Posterior vena cava (tissue), 2 donors: ENCODE measurements at regions of chr17 and their contacts with region 1.

Region 1: GRCh38 chr17:78774956-78775571 is 7.0 kb downstream of the CYTH1 start:
- DNase-seq: no peak

Region 2: DNA sequence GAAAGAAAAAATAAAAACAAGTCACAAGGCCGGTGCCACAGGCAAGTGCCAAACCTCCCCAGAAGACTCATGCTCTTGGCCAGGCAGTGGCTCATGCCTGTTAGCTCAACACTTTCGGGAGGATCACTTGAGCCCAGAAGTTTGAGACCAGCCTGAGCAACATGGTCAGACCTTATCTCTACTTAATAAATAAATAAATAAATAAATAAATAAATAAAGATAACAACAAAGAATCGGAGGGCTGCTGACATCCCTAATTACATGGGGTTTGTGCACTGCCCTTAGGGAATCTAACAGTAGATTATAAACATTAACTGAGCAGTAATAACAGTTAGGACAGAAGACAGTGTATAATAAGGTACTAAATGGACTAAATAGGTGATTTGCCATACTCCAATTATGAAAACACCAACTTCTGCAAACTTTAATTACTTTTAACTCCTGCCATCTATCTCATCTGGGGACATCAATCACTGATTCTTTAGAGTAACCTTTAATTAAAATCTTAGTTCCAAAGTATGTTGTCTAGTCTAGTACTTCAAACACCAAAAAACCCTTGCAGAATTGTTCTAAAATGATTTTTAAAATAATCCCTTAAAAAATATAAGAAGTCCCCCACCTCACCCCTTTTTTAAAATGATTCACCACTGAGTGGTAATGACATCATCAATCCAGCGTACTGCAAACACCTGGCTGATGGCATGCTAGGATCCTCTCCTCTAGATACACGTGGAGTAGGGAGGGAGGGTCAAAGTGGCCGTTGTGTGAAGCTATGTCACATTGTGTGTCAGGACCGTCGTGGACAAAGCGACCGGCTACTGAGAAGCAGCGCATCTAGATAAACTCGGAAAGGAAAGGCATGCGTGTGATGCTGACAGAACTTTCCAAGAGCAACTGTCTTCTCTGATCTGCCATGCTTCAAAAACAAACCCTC is 21.5 kb before region 1 on chr17:
- intact Hi-C with region 1: loop called in 1 of 2 experiments (anchors 2 kb)
- DNase-seq: no peak

Region 3: DNA sequence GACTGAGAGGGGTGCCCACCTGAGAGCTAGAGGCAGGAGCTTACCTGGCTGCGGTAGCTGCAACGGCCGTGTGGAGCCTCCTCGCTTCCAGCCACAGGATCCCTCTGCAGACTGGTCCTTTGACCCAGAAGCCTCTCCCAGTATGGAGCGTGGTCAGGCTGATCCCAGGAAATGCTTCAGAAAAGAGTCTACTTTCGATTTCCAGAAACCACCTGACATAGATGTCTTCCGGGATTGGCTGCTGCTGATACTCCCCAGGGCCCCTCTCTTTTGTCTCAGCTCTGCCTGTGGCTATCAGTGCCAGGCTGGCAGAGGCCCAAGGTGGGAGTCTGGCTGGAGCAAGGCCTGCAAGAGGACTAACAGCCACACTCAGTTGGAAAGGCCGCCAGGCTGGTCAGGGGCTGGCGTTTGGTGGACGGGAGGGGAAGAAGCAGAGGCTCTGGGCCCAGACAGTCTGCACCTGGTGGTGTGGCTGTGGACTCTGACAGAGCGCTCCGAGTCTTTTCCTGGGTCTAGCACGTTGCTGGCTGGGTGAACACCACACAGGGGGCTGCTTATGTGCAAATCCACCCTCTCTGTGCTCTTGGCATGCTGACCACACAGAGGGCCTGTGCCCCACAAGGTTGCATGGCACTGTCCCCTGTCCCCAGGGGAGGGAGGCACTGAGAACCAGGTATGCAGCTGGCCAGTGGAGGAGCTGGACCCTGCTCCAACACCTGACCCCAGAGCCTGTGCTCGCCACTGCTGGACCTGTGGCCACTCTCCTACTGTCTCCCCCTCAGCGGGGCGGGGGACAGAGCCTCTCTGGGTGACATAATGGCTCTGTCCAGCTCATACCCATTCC is 204.9 kb after region 1 on chr17 and contains the start of gene LGALS3BP:
- intact Hi-C with region 1: no loop called
- DNase-seq: peak; percentile 87
- total RNA-seq, gene LGALS3BP: 103 to 163 TPM

Region 4: GRCh38 chr17:79393358-79394202 is 618.5 kb after region 1 on chr17:
- intact Hi-C with region 1: no loop called
- DNase-seq: peak; percentile 94